ENCODE measurements at regions of chr19 and their contacts with region 1.

Region 1: DNA sequence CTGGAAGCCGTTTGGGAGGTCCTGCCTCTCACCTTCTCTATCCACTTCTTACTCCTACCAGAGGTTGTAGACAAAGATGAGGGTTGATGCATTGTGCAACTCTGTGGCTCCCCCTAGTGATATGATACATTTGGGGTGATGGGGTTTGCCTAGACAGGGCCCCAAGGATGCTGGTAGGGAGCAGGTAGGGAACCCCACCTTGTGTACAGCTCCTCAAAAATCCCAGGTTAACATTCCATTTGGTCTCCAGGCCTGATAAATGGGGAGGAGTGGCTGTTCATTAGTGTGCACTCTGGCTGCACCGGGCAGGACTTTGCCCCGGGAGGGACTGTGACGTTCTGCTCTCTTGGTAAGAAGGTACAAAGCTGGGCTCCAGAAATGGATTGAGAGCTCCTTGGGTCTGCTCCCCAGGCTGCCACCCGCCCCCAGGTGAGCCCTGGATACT is 19.2 kb downstream of the SIGLEC8 start:
- DNase-seq: no peak
- H3K4me3 ChIP-seq: no peak overlapping the region
- H3K27ac ChIP-seq: no peak overlapping the region
- H3K4me1 ChIP-seq: no peaks in the 10 kb centered on the region
- H3K27me3 ChIP-seq: no peaks in the 10 kb centered on the region
- CTCF ChIP-seq: peak; percentile 39 to 81 (median 75)
- EP300 ChIP-seq: no peak
- POLR2A ChIP-seq: no peak
- RAD21 ChIP-seq: peak; percentile 73 to 79

Region 2: DNA sequence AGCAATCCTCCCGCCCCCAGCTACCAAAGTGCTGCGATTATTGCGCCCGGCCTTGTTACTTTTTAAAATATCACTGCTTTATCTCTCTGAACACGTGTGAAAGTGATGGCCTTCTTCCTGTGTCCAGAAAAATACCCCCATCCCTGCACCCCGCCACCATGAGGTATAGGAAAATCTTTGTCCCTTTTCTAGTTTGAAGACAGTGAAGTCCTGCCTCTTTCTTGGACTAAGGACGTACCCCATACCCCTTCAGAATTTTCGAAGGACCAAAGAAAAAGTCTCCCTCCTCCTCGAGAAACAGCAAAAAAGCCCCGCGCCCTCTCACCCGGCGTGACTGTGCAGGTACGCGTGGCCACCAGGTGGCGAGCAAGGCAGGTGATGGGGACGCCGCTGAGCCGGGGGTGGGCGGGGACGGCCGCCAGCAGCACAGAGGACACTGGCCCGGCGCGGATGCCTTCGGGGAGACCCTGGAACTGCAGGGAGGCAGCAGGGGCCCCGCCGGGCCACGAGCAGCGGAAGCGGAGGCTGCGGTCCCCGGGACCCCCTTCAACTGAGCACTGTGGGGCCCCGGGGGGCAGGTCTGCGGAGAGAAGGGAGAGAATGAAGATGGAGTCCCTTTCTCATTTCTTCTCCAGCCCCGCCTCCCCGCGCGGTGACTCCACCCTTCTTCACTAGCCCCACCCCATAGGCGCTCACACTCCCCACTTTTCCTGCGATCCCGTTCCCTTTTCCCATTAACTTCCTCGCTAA is 100.3 kb before region 1 on chr19:
- CTCF ChIA-PET with region 1: interaction called, 42 read pairs
- POLR2A ChIA-PET with region 1: no interaction called
- DNase-seq: peak; percentile 39 to 95
- H3K4me3 ChIP-seq: peak overlapping the region; percentile 56 to 72 (median 66)
- H3K27ac ChIP-seq: 0 out of 2 replicates have a peak overlapping the region, but pooled peaks have one; percentile 41
- H3K4me1 ChIP-seq: peaks cover 0 to 20% (median 16%) of the 10 kb centered on the region in 4 experiments; a peak in 6 of 7 replicates
- H3K27me3 ChIP-seq: peaks cover 0 to 18% (median 11%) of the 10 kb centered on the region in 4 experiments; a peak in 5 of 7 replicates
- CTCF ChIP-seq: peak; percentile 81 to 94 (median 88)
- EP300 ChIP-seq: no peak
- POLR2A ChIP-seq: peak in 1 of 2 experiments; percentile 61; a peak in 2 of 3 replicates
- RAD21 ChIP-seq: peak; percentile 66 to 77

Region 3: GRCh38 chr19:51407511-51408131 is 31.4 kb before region 1 on chr19:
- CTCF ChIA-PET with region 1: interaction called, 32 read pairs
- POLR2A ChIA-PET with region 1: no interaction called
- DNase-seq: no peak
- H3K4me3 ChIP-seq: no peak overlapping the region
- H3K27ac ChIP-seq: no peak overlapping the region
- H3K4me1 ChIP-seq: peaks cover 0 to 13% (median 4%) of the 10 kb centered on the region in 4 experiments; a peak in 6 of 7 replicates
- H3K27me3 ChIP-seq: no peaks in the 10 kb centered on the region
- CTCF ChIP-seq: peak; percentile 7 to 77 (median 64)
- EP300 ChIP-seq: no peak
- POLR2A ChIP-seq: no peak
- RAD21 ChIP-seq: peak; percentile 54 to 69

Region 4: GRCh38 chr19:51473009-51473707 is 34.1 kb after region 1 on chr19:
- CTCF ChIA-PET with region 1: interaction called, 11 read pairs
- POLR2A ChIA-PET with region 1: no interaction called
- DNase-seq: peak; percentile 17 to 86
- H3K4me3 ChIP-seq: no peak overlapping the region
- H3K27ac ChIP-seq: no peak overlapping the region
- H3K4me1 ChIP-seq: no peaks in the 10 kb centered on the region
- H3K27me3 ChIP-seq: no peaks in the 10 kb centered on the region; a peak in 1 of 7 replicates
- CTCF ChIP-seq: peak; percentile 76 to 81 (median 78)
- EP300 ChIP-seq: no peak
- POLR2A ChIP-seq: no peak
- RAD21 ChIP-seq: peak; percentile 78

Region 5: DNA sequence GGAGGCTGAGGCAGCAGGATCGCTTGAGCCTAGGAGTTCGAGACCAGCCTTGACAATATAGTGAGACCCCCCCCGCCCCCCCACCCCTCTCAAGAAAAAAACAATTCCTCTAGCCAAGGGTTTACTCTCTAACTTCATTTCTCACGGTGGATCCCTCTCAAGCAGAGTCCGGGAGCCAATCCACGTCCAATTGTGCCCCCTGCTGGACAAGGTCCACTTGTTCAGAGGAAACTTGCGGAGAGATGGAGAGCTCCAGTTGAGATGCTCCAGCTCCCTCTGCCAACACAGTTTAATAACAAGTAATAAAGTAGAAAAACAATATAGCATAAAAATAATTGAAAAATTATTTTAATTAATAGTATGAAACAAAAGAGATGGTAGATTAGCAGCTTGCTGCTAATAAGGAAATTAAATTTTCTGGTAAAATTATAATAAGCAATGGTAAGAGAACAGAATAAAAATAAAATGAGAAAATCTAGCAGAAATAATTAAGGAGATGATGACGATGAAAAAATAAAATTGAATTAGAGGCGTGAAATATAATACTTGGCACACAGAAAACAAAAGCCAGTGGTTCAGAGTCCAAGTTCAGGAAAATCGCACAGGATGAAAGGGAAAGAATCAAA is 222.0 kb after region 1 on chr19:
- CTCF ChIA-PET with region 1: interaction called, 15 read pairs
- POLR2A ChIA-PET with region 1: no interaction called
- DNase-seq: peak in 1 of 2 experiments; percentile 75
- H3K4me3 ChIP-seq: no peak overlapping the region
- H3K27ac ChIP-seq: no peak overlapping the region
- H3K4me1 ChIP-seq: no peaks in the 10 kb centered on the region
- H3K27me3 ChIP-seq: peaks cover 0 to 2% (median 0%) of the 10 kb centered on the region in 4 experiments; a peak in 1 of 7 replicates
- CTCF ChIP-seq: peak; percentile 60 to 77 (median 64)
- EP300 ChIP-seq: no peak
- POLR2A ChIP-seq: no peak
- RAD21 ChIP-seq: peak; percentile 73 to 83

Measured in H1 (cell line).